Activated B cell treated with CpG ODN at 0.5 μM for 24 hours (primary cell): ENCODE measurements at regions of chr13 and their contacts with region 1.

Region 1: DNA sequence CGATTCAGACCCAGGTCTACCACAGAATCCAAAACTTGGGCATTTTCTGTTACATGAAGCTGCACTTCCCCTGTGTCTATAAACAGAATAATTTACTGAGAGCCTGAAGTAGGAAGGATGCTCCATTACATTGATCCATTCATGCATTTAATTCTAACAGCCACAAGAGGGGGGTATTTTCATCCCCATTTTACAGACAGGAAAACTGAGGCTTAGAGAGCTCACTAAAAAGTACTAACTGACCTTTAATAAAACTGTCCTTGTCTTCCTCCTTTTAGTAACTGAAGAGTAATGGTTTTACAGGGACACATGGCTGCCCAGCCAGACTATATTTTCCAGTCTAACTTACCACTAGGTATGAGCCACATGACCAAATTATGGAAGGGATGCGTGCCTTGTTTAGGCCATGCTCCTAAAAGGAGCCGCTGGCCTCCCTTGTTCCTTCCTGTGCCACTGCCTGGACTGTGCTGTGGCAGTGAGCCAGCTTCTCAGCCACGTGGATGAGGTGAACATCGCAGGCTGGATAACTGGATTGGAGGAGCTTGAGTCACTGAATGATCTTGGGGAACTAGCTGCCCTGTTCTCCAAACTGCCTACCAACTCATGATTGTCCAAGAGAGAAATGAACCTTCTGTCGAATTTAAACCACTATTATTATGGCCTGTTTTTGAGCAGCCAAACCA is 108.3 kb downstream of the DOCK9 start:
- DNase-seq: no peak
- ATAC-seq: no peak
- H3K4me3 Mint-ChIP-seq: no peak overlapping the region
- H3K27ac Mint-ChIP-seq: no peak overlapping the region
- H3K4me1 Mint-ChIP-seq: no peaks in the 10 kb centered on the region
- H3K27me3 Mint-ChIP-seq: no peaks in the 10 kb centered on the region
- CTCF ChIP-seq: no peak

Region 2: GRCh38 chr13:98258226-98258625 is 611.3 kb before region 1 on chr13:
- CTCF ChIA-PET with region 1: no interaction called
- POLR2A ChIA-PET with region 1: no interaction called
- intact Hi-C with region 1: loop called (anchors 5 kb)
- DNase-seq: no peak
- ATAC-seq: no peak
- H3K4me3 Mint-ChIP-seq: no peak overlapping the region
- H3K27ac Mint-ChIP-seq: no peak overlapping the region
- H3K4me1 Mint-ChIP-seq: no peaks in the 10 kb centered on the region
- H3K27me3 Mint-ChIP-seq: peaks cover 7% of the 10 kb centered on the region
- CTCF ChIP-seq: no peak

Region 3: GRCh38 chr13:98938801-98939200 is 69.3 kb after region 1 on chr13:
- CTCF ChIA-PET with region 1: no interaction called
- POLR2A ChIA-PET with region 1: no interaction called
- intact Hi-C with region 1: no loop called
- DNase-seq: no peak
- ATAC-seq: no peak
- H3K4me3 Mint-ChIP-seq: no peak overlapping the region
- H3K27ac Mint-ChIP-seq: no peak overlapping the region
- H3K4me1 Mint-ChIP-seq: no peaks in the 10 kb centered on the region
- H3K27me3 Mint-ChIP-seq: no peaks in the 10 kb centered on the region
- CTCF ChIP-seq: no peak

Region 4: GRCh38 chr13:98959786-98960605 is 90.4 kb after region 1 on chr13:
- CTCF ChIA-PET with region 1: no interaction called
- POLR2A ChIA-PET with region 1: no interaction called
- intact Hi-C with region 1: no loop called
- DNase-seq: no peak
- ATAC-seq: no peak
- H3K4me3 Mint-ChIP-seq: no peak overlapping the region
- H3K27ac Mint-ChIP-seq: no peak overlapping the region
- H3K4me1 Mint-ChIP-seq: no peaks in the 10 kb centered on the region
- H3K27me3 Mint-ChIP-seq: no peaks in the 10 kb centered on the region
- CTCF ChIP-seq: no peak

Region 5: DNA sequence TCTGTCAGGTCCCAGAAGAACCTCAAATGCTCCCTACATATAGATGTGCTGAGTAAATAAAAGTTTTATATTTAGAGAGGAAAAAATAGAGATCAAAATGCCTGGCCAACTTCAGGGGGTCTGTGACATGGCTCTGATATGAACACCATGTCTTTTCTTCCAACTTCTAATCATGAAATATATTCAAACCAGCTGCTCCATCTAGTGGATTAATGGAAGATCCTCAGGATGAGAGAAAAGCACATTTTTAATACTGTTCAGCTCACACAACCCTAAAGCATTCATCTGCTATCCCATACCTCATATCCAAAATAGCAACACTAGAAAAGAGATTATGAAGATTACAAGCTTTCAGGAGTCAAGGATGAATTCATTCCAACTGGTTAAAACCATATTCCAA is 164.3 kb after region 1 on chr13:
- CTCF ChIA-PET with region 1: no interaction called
- POLR2A ChIA-PET with region 1: no interaction called
- intact Hi-C with region 1: loop called (anchors 5 kb)
- DNase-seq: no peak
- ATAC-seq: no peak
- H3K4me3 Mint-ChIP-seq: no peak overlapping the region
- H3K27ac Mint-ChIP-seq: no peak overlapping the region
- H3K4me1 Mint-ChIP-seq: no peaks in the 10 kb centered on the region
- H3K27me3 Mint-ChIP-seq: no peaks in the 10 kb centered on the region
- CTCF ChIP-seq: no peak

Region 6: GRCh38 chr13:99307247-99307646 is 437.7 kb after region 1 on chr13 and contains the start of gene GPR183:
- CTCF ChIA-PET with region 1: no interaction called
- POLR2A ChIA-PET with region 1: no interaction called
- intact Hi-C with region 1: no loop called
- DNase-seq: no peak
- ATAC-seq: peak; percentile 83
- H3K4me3 Mint-ChIP-seq: peak within 1 kb of the TSS; percentile 95
- H3K27ac Mint-ChIP-seq: peak within 1 kb of the TSS; percentile 92
- H3K4me1 Mint-ChIP-seq: peaks cover 82% of the 10 kb centered on the region
- H3K27me3 Mint-ChIP-seq: no peaks in the 10 kb centered on the region
- CTCF ChIP-seq: no peak
- total RNA-seq, gene GPR183: 84.5 and 86.4 TPM in 2 replicates

Region 7: DNA sequence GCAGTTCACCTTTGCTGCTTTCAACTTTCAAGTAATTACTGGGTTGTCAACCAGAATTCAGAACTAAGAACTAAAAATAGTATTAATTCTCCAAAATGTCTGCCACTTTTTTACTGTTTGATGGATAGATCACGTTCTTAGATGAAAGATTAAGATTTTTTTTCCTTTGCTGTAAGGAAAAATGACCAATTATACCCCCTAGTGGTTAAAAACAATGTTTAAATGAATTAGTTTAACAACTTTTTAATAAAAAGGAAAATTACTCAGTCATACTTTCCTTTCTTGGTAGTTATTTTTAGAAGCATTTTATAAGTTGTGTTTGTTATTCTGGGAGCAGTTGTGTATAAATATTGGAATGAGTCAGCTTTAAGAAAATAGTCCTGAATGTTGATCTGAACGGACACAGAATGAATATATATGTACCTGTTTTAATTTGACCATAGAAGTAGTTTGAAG is 636.3 kb after region 1 on chr13:
- CTCF ChIA-PET with region 1: no interaction called
- POLR2A ChIA-PET with region 1: no interaction called
- intact Hi-C with region 1: no loop called
- DNase-seq: no peak
- ATAC-seq: no peak
- H3K4me3 Mint-ChIP-seq: peak overlapping the region; percentile 65
- H3K27ac Mint-ChIP-seq: peak overlapping the region; percentile 84
- H3K4me1 Mint-ChIP-seq: peaks cover 88% of the 10 kb centered on the region
- H3K27me3 Mint-ChIP-seq: no peaks in the 10 kb centered on the region
- CTCF ChIP-seq: peak; percentile 25